ENCODE measurements at regions of chr12 and their contacts with region 1.

Region 1: GRCh38 chr12:64696080-64696741 is 63.0 kb downstream of the GNS start:
- DNase-seq: no peak
- ATAC-seq: no peak
- H3K4me3 ChIP-seq: no peak overlapping the region
- H3K27ac ChIP-seq: no peak overlapping the region
- H3K4me1 ChIP-seq: no peaks in the 10 kb centered on the region
- H3K27me3 ChIP-seq: no peaks in the 10 kb centered on the region

Region 2: GRCh38 chr12:64544371-64545080 is 151.7 kb before region 1 on chr12:
- intact Hi-C with region 1: loop called in 3 of 4 experiments (anchors 2 to 5 kb)
- DNase-seq: no peak
- ATAC-seq: no peak
- H3K4me3 ChIP-seq: no peak overlapping the region
- H3K27ac ChIP-seq: no peak overlapping the region
- H3K4me1 ChIP-seq: no peaks in the 10 kb centered on the region
- H3K27me3 ChIP-seq: no peaks in the 10 kb centered on the region

Region 3: GRCh38 chr12:64551698-64552097 is 144.5 kb before region 1 on chr12:
- intact Hi-C with region 1: loop called (anchors 2 to 5 kb)
- DNase-seq: no peak
- ATAC-seq: no peak
- H3K4me3 ChIP-seq: no peak overlapping the region
- H3K27ac ChIP-seq: no peak overlapping the region
- H3K4me1 ChIP-seq: no peaks in the 10 kb centered on the region
- H3K27me3 ChIP-seq: no peaks in the 10 kb centered on the region